IMR-90 (cell line): ENCODE measurements at regions of chr12 and their contacts with region 1.

Region 1: GRCh38 chr12:91382081-91382543 is 199.5 kb upstream of the DCN start:
- DNase-seq: peak; percentile 80
- ATAC-seq: peak; percentile 67
- H3K4me3 ChIP-seq: peak overlapping the region; percentile 77
- H3K27ac ChIP-seq: 0 out of 2 replicates have a peak overlapping the region, but pooled peaks have one; percentile 71
- H3K4me1 ChIP-seq: peaks cover 6% of the 10 kb centered on the region
- H3K27me3 ChIP-seq: peaks cover 5% of the 10 kb centered on the region
- CTCF ChIP-seq: peak; percentile 90
- POLR2A ChIP-seq: 0 out of 2 replicates have a peak, but pooled peaks have one; percentile 23
- RAD21 ChIP-seq: peak; percentile 91

Region 2: DNA sequence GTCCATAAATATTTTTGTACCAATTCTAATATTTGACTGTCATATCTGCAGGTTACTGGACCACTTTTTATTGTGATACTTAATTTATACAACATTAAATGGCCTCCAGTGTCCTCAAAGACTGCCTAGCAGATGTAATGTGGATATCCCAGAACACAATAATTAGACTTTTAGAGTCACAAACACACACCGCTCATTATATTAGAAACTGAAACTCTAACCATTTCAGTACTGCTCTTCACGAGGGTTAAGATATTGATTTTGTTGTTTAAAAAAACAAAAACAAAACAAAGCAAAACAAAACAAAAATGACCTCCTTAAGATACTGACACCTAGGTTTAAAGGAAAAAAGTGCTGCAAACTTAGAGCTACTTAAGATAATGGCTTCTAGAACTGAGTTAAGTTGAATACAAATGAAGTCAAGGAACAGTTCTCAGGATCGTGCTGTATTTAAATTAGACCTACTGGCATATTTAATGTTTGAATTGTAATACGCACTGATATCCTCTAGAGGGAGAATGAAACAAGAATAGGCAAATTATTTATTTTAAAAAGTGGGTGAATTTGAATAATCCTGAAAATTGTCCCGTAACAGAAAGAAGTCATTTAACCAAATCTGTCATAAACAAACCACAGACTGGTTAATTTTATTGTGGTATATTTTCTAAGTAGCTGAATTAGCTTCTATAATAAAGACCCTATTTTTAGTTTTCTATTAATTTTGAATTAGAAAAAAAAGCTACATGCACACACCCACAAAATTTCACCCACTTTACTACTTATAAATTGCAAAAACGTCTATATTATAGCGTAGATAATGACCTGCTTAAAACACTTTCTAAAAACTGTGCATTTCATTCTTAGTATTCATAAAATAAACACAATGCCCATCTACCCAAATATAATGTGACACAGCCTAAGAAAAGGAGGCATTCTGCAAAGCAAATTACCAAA is 195.8 kb after region 1 on chr12:
- CTCF ChIA-PET with region 1: interaction called, 7 read pairs
- POLR2A ChIA-PET with region 1: no interaction called
- dilution Hi-C with region 1: no loop called
- in situ Hi-C with region 1: no loop called
- intact Hi-C with region 1: loop called (anchors 2 kb)
- DNase-seq: peak; percentile 35
- ATAC-seq: peak; percentile 74
- H3K4me3 ChIP-seq: peak overlapping the region; percentile 39; the same call in 1 of the 2 replicates
- H3K27ac ChIP-seq: no peak overlapping the region
- H3K4me1 ChIP-seq: no peaks in the 10 kb centered on the region
- H3K27me3 ChIP-seq: no peaks in the 10 kb centered on the region; the same call in 1 of the 2 replicates
- CTCF ChIP-seq: peak; percentile 59
- POLR2A ChIP-seq: no peak
- RAD21 ChIP-seq: peak; percentile 52

Region 3: DNA sequence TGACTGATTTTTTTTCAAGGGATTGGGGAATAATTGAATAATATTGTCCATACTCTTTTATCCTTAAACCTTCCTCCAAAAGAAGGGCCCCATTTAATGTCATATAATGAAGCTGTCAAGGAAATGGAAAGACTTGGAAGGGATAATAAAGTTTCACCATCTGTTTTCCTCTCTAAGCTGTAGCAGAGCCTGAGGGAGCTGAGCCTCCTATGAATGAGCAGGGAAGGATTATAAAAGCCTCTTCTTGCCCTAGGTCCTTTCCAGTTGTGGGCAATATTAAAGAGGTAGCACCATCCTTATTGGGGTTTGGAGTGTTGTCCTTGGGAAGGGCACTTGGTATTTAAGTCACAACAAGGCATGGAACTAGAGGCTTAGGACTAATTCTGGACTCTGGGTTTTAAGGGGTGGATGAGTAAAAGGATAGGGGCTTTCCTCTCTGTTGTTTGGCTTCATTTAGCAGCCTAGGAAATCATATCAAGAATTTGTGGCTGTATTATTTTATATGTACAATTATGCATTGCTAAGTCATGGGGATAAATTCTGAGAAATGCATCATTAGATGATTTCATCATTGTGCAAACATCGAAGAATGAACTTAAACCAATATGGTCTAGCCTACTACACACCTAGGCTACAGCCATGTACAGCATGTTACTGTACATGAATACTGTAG is 209.0 kb after region 1 on chr12:
- CTCF ChIA-PET with region 1: no interaction called
- POLR2A ChIA-PET with region 1: no interaction called
- dilution Hi-C with region 1: no loop called
- in situ Hi-C with region 1: no loop called
- intact Hi-C with region 1: no loop called
- DNase-seq: no peak
- ATAC-seq: no peak
- H3K4me3 ChIP-seq: no peak overlapping the region
- H3K27ac ChIP-seq: no peak overlapping the region
- H3K4me1 ChIP-seq: no peaks in the 10 kb centered on the region
- H3K27me3 ChIP-seq: no peaks in the 10 kb centered on the region
- CTCF ChIP-seq: no peak
- POLR2A ChIP-seq: no peak
- RAD21 ChIP-seq: no peak

Region 4: DNA sequence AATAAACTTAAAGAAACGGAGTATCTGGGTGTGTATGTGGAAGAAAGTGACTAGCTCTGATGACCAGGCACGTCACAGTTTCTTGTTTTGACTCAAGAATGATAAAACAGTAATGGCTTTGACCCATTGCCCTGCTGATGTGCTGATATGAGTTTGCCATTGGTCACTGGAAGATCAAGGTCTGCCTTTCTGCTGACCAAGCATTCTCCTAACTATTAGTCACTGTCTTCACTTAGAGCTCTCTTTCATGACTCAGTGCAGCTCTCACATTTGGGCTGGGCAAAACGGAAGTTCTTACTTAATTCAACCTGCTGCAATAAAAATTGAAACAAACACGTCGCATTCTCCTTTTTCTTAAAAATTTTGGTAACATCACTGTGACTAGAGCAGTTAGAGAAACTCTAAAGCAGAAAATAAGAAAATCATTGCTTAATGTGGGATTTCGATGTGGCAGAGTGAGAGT is 396.9 kb after region 1 on chr12:
- CTCF ChIA-PET with region 1: no interaction called
- POLR2A ChIA-PET with region 1: no interaction called
- dilution Hi-C with region 1: no loop called
- in situ Hi-C with region 1: no loop called
- intact Hi-C with region 1: loop called (anchors 10 kb)
- DNase-seq: peak; percentile 88
- ATAC-seq: peak; percentile 81
- H3K4me3 ChIP-seq: no peak overlapping the region
- H3K27ac ChIP-seq: no peak overlapping the region
- H3K4me1 ChIP-seq: peaks cover 4% of the 10 kb centered on the region
- H3K27me3 ChIP-seq: peaks cover 2% of the 10 kb centered on the region; the same call in 1 of the 2 replicates
- CTCF ChIP-seq: no peak
- POLR2A ChIP-seq: no peak
- RAD21 ChIP-seq: no peak

Region 5: GRCh38 chr12:92297932-92298696 is 916.0 kb after region 1 on chr12:
- CTCF ChIA-PET with region 1: no interaction called
- POLR2A ChIA-PET with region 1: no interaction called
- dilution Hi-C with region 1: no loop called
- in situ Hi-C with region 1: no loop called
- intact Hi-C with region 1: loop called (anchors 2 kb)
- DNase-seq: peak; percentile 80
- ATAC-seq: peak; percentile 55
- H3K4me3 ChIP-seq: no peak overlapping the region
- H3K27ac ChIP-seq: peak overlapping the region; percentile 79
- H3K4me1 ChIP-seq: peaks cover 14% of the 10 kb centered on the region
- H3K27me3 ChIP-seq: no peaks in the 10 kb centered on the region
- CTCF ChIP-seq: no peak
- POLR2A ChIP-seq: no peak
- RAD21 ChIP-seq: no peak

Region 6: GRCh38 chr12:92408072-92408900 is 1026.2 kb after region 1 on chr12:
- CTCF ChIA-PET with region 1: no interaction called
- POLR2A ChIA-PET with region 1: interaction called, 4 read pairs
- dilution Hi-C with region 1: no loop called
- in situ Hi-C with region 1: no loop called
- intact Hi-C with region 1: loop called (anchors 10 kb)
- DNase-seq: no peak
- ATAC-seq: no peak
- H3K4me3 ChIP-seq: no peak overlapping the region
- H3K27ac ChIP-seq: no peak overlapping the region
- H3K4me1 ChIP-seq: no peaks in the 10 kb centered on the region
- H3K27me3 ChIP-seq: peaks cover 2% of the 10 kb centered on the region
- CTCF ChIP-seq: peak; percentile 31; the same call in 1 of the 2 replicates
- POLR2A ChIP-seq: no peak
- RAD21 ChIP-seq: peak; percentile 48

Region 7: DNA sequence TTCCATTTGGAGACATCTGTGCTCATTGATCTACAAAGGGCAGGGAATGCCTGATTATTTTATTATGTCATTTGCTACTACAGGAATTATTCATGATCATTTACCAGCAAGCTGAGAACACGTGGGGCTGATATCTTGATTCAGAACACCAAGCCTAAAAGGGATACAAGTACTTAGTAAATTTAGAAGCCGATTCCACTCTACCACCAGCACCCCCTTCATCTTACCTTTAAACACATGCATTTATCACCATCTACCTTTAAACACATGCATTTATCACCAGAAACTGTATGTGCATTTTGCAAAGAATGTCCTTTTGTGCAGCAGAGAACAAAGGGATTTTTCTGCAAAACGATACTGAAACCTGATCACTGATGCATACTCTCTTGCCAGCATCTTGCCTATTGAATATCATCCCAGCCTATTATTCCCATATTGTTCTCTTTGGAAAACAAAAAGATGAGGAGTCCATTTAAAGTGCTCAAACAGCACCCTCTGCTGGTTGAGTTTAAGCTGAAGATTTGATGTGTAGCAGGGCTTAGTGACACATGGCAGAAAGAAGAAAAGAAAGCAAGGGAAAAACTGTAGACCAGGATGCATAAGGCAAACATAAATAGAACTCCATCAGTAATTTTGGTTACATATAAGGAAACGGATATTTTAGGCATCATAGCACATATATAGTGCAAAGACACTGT is 1188.1 kb after region 1 on chr12:
- CTCF ChIA-PET with region 1: interaction called, 6 read pairs
- POLR2A ChIA-PET with region 1: no interaction called
- dilution Hi-C with region 1: no loop called
- in situ Hi-C with region 1: no loop called
- intact Hi-C with region 1: loop called (anchors 1 kb)
- DNase-seq: peak; percentile 86
- ATAC-seq: peak; percentile 65
- H3K4me3 ChIP-seq: no peak overlapping the region
- H3K27ac ChIP-seq: no peak overlapping the region
- H3K4me1 ChIP-seq: no peaks in the 10 kb centered on the region
- H3K27me3 ChIP-seq: no peaks in the 10 kb centered on the region
- CTCF ChIP-seq: peak; percentile 77
- POLR2A ChIP-seq: no peak
- RAD21 ChIP-seq: peak; percentile 87

Region 8: DNA sequence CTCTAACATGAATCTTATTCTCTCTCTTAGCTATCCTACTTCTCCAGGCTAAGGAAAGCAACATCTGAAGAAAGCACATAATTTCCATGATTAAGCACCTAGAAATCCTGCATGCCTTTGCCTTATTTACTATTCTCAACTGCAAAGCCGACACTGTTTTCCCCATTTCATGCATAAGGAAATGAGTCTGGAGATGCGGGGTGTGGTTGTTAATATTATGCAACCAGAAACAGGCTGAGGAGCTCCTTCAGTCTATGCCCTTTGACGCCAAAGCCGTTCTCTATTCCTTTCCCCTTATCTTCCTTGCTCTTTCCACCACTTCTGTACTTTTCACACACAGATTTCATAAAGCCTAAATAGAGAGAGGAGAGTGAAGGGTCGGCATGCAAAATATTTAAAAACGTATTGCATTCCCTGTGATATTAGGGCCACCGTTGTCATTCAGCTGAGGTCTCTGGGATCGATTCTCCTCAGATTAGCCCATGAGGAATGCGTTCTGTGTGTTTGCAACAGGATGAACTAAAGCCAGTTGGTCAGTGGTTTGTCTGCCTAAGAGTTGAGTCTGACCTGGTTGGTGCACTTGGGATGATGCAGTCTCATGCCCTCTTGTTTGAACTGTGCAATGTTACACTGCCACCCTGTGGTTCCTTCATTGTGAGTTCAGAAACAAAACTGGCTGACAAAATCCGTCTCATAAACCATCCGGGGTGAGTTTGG is 1267.6 kb after region 1 on chr12:
- CTCF ChIA-PET with region 1: interaction called, 4 read pairs
- POLR2A ChIA-PET with region 1: no interaction called
- dilution Hi-C with region 1: no loop called
- in situ Hi-C with region 1: loop called (anchors 10 kb)
- intact Hi-C with region 1: loop called (anchors 1 kb)
- DNase-seq: peak; percentile 90
- ATAC-seq: peak; percentile 99
- H3K4me3 ChIP-seq: no peak overlapping the region
- H3K27ac ChIP-seq: no peak overlapping the region
- H3K4me1 ChIP-seq: no peaks in the 10 kb centered on the region
- H3K27me3 ChIP-seq: no peaks in the 10 kb centered on the region
- CTCF ChIP-seq: peak; percentile 85
- POLR2A ChIP-seq: no peak
- RAD21 ChIP-seq: peak; percentile 94